Cardiac septum (tissue), 1 donor: ENCODE measurements at regions of chr3 and their contacts with region 1.

Region 1: DNA sequence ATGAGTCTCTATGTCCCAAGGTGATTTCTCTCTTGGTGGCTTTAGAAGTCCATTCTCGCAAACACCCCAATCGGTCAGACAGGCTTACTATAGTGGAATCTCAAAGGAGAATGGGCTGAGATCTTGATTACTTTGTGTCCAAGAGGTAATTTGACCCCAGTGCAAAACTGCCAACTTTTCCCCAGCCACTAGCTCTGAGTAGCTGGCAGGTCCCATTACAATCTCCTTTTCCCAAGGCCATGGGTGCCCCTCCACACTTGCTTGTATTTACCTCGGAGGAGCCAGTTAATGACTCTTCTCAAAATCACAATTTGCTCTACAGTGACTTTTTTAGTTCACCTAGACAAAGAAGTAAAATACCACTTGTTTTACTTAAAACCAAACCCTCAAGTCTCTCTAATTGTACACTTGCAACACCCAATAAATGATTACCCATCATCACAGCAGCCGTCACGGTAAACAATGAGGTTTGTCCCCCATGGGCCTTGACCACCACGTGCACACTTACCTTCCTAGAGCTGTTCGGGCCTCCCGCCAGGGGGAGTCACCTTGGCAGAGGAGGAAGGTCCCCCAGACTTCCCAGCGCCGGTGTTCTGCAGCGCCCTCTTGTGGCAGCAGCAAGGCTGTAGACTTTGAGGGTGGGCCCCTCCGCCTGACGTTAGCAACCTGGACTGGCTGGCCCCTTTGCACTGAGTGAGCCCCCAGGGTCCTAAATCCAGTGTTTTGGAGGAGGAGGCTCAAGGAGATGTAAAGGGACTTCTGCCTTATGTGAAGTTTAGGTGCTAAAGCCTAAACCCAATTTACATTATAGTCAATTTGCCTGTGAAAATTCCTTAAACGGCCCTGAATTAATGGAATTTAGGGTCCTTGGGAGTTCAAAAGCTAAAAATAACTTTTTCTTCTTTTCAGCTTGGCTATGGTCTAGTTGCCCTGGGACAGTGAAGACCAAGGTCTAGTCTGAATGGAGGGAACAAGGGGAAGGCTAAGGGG is 18.6 kb upstream of the HDAC11 start:
- DNase-seq: no peak

Region 2: DNA sequence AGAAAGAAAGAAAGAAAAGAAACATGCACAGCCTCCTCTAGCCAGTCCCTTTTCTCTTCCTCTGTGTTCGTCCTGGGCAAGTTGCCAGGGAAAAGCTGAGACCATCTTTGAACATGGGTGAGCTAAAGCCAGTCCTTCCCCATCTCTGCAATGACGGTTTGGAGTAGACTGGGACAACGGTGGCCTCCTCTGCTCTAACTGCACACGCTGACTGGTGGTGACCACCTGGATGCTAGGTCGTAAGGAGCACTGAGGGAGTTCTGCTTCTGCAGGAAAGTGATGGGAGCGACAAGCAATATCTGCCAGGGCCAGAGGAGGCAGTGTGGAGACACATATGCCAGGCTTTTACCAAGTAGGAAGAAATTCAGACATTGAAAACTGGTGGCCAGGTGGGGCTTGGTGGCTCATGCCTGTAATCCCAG is 153.1 kb before region 1 on chr3:
- intact Hi-C with region 1: loop called (anchors 5 kb)
- DNase-seq: no peak

Region 3: DNA sequence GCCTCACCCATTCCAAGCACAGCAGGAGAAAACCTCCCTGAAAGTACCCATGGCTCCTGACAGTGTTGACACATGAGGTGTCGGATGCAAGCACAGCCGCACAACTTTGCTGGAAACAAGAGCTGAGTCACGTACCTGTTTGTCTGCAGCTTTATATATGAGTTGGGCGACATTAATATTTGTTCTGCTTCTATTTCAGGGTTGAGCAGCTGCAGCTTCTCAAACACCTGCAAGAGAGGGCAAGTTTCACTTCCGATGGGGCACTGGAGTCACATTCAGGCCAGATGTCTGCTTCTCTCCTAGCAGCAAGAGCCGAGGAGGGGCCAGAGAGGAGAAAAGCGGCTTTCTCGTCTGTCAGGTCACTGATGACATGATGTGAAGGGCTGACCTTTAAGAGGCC is 129.3 kb before region 1 on chr3:
- intact Hi-C with region 1: no loop called
- DNase-seq: no peak

Region 4: DNA sequence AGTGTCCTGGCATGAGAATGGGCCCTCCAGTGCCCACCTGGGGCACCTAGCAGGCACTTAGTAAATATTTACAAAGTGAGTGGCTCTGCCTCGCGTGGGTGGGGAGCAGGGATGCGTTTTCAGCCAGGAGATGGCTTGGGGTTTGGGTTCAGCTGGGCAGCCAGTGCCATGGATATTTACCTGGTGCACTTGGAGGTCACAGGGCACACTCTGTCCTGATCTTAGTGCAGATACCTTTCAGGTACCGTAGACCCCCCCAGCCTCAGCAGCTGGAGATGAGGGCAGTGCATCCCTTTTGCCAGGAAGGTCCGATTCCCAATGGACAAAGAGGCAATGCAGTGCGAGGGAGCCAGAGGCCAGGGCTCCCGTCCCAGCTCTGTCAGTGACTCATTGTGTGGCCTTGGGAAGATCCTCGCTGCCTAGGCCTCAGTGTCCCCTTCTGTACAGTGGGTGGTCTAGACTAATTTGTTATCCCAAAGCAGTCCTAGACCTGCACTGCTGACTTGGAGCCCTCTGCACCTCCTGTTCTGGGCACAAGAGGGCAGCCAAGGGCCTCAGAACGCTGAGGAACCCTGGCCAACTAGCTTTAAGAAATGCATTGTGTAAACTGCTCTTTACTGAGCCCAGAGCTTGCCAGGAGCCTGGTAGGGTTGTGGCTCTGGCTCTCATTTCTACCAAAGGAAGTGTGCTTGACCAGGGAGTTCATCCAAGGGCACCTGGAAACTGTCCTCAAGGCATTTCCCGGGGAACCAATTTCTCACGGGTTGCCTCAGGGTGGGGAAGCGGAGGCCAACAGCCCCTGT is 34.7 kb after region 1 on chr3:
- intact Hi-C with region 1: no loop called
- DNase-seq: no peak

Region 5: DNA sequence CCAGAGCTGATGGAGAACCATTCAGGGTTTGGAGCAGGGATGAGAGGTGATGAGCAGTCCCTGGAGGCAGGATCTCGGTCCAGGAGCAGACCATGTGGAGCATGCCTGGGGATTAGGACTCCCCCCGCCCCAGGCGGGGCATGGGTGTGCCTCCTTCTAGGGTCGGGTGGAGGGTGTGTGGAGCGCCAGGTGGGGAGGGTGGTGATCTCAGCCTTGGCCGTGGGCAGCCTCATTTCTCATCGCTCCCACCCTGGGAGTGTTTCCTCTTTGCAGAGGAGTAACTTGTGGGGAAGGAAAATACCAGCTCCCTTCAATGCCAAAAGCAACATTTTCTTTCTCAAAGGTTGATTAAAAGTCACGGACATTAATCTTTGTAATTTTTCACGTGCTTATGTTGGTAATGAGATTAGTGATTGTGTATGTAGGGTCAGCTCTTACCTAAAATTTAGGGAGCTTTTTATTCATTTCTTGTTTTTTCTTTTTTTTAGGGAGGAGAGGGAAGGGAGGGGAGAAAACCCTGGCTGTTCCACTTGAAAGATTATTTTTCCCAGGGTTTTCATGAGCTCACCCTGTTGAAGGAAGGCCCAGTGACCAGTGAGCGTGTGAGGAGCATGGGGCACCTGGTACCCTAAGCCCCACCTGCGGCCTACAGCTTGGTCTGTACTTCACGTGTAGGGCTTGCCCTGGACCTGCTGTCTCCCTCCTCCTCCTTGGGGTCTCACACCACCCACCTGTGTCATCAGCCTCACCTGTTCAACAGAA is 98.5 kb after region 1 on chr3:
- intact Hi-C with region 1: no loop called
- DNase-seq: no peak